ENCODE measurements at regions of chr3 and their contacts with region 1.

Region 1: DNA sequence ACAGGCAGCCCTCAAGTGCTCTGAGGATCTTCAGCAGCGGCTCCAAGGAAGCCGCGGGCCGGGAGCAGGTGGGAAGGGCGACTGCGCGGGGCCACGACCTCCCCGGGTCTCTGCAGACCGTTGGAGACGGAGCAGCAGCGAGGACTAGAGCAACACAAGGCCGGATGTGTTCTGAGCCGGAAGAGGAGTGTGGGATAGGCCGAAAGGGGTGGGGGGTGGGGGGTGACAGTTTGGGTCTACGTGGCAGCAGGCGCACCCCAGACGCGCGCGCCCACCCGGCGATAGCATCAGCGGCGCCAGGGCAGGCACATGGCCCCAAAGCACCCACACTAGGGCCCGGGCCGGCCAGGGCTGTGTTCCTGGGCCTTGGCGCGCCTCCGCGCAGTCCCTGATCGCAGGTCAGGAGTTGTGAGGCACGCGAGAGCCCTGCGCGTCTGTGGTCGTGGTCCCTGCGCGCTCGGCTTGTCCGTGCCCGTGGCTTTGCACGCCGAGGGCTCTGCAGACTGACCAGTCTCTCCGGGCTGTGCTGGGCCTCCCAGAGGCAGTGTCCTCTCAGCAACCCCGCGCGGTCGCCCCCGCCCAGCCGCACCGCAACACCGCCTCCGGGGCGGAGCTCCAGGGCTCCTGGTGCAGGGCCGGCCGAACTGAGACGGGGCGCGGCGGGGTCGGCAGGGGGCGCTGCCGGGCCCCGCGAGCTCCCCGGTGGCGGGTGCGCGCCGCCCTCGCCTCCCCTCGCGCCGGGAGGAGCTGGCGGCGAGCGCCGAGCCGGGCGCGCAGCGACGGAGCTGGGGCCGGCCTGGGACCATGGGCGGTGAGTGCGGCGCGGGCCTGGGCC is at the start of gene PXYLP1:
- DNase-seq: peak; percentile 75 to 84
- ATAC-seq: peak; percentile 94 to 96
- H3K4me3 ChIP-seq: peak within 1 kb of the TSS; percentile 90
- H3K27ac ChIP-seq: peak within 1 kb of the TSS; percentile 89 to 90
- H3K4me1 ChIP-seq: peaks cover 21% of the 10 kb centered on the region; the same call in 2 of the 3 replicates
- CTCF ChIP-seq: peak; percentile 95
- EP300 ChIP-seq: no peak
- POLR2A ChIP-seq: peak; percentile 89
- RAD21 ChIP-seq: peak in 1 of 2 experiments; percentile 64; a peak in 4 of 5 replicates
- polyA plus RNA-seq, gene PXYLP1: 11.7 and 12.1 TPM in 2 replicates

Region 2: DNA sequence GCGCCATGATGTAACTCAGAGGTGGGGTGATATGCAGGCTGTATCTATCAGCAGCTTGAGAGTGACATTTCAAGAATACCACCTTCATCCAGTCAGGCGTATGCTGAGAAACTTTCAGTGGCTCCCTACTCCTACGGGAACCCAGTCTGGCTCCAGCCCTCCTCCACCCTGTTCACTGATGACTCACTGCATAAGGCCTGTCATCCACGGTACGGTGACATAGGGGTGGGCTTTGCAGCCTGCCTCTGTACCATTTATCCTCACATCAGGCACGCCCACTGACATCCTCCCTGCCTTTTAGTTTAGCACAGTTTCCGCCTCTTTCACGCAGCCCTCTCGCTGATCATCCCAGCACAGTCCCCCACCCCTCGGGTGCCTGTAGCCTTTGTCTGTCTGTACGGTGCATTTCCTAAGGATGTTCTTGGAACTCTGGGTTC is 12.0 kb after region 1 on chr3:
- CTCF ChIA-PET with region 1: interaction called, 25 read pairs
- POLR2A ChIA-PET with region 1: interaction called, 4 read pairs
- DNase-seq: no peak
- ATAC-seq: peak in 1 of 2 experiments; percentile 42; a peak in 2 of 6 replicates
- H3K4me3 ChIP-seq: no peak overlapping the region
- H3K27ac ChIP-seq: no peak overlapping the region
- H3K4me1 ChIP-seq: 0 out of 3 replicates have a peak, but pooled peaks cover 7% of the 10 kb centered on the region
- CTCF ChIP-seq: no peak
- EP300 ChIP-seq: no peak
- POLR2A ChIP-seq: no peak
- RAD21 ChIP-seq: no peak

Region 3: DNA sequence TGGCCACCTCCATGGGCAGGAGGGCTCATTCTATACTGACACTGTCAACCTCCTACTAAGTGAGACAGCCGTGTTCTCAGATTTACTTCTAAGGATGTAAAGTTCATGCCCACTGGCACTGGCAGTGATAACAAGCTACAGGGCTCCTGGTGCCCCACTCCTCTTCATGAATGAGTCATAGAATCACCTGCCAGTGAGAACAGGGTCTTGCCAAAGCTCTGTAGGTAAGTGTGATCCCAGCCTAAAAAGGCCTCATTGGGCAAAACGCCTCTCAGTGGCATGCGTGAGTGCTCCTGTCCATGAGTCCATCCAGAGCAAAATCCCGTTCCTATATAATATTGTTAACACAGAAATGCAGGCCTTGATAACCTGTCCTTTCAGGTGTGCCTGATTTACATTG is 17.7 kb after region 1 on chr3:
- CTCF ChIA-PET with region 1: interaction called, 27 read pairs
- POLR2A ChIA-PET with region 1: interaction called, 4 read pairs
- DNase-seq: no peak
- ATAC-seq: no peak
- H3K4me3 ChIP-seq: no peak overlapping the region
- H3K27ac ChIP-seq: no peak overlapping the region
- H3K4me1 ChIP-seq: no peaks in the 10 kb centered on the region
- CTCF ChIP-seq: no peak
- EP300 ChIP-seq: no peak
- POLR2A ChIP-seq: no peak
- RAD21 ChIP-seq: no peak

Region 4: GRCh38 chr3:141255846-141256261 is 24.5 kb after region 1 on chr3:
- CTCF ChIA-PET with region 1: interaction called, 27 read pairs
- POLR2A ChIA-PET with region 1: interaction called, 3 read pairs
- DNase-seq: peak; percentile 46 to 55
- ATAC-seq: peak; percentile 64 to 93
- H3K4me3 ChIP-seq: no peak overlapping the region
- H3K27ac ChIP-seq: no peak overlapping the region
- H3K4me1 ChIP-seq: no peaks in the 10 kb centered on the region
- CTCF ChIP-seq: peak; percentile 34
- EP300 ChIP-seq: no peak
- POLR2A ChIP-seq: no peak
- RAD21 ChIP-seq: peak in 1 of 2 experiments; percentile 48; a peak in 2 of 5 replicates

Region 5: GRCh38 chr3:141291559-141292355 is 60.4 kb after region 1 on chr3:
- CTCF ChIA-PET with region 1: interaction called, 12 read pairs
- POLR2A ChIA-PET with region 1: interaction called, 3 read pairs
- DNase-seq: no peak
- ATAC-seq: no peak
- H3K4me3 ChIP-seq: no peak overlapping the region
- H3K27ac ChIP-seq: no peak overlapping the region
- H3K4me1 ChIP-seq: peaks cover 9% of the 10 kb centered on the region; the same call in 1 of the 3 replicates
- CTCF ChIP-seq: no peak
- EP300 ChIP-seq: no peak
- POLR2A ChIP-seq: no peak
- RAD21 ChIP-seq: no peak

Region 6: DNA sequence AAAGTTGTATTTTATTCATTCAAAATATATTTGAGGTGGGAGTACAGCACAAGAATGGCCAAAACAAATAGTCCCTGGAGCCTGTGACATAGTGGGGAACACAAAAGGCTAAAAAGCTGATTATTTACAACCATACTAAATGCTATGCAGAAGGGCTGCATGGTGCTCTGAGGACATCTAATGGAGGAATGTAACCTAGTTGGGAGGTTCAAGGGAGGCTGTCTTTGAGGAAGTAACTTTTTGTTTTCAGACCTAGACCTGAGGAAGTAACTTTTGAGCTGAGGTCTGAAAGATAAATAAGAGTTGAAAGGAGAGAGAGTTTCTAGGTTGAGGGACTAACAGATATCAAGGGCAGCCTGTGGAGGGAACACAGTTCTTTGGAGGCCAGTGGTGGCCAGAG is 220.7 kb after region 1 on chr3:
- CTCF ChIA-PET with region 1: interaction called, 12 read pairs
- POLR2A ChIA-PET with region 1: interaction called, 3 read pairs
- DNase-seq: peak; percentile 38 to 82
- ATAC-seq: peak; percentile 74 to 79
- H3K4me3 ChIP-seq: no peak overlapping the region
- H3K27ac ChIP-seq: peak overlapping the region; percentile 67 to 79
- H3K4me1 ChIP-seq: peaks cover 44% of the 10 kb centered on the region
- CTCF ChIP-seq: peak; percentile 84
- EP300 ChIP-seq: no peak
- POLR2A ChIP-seq: no peak
- RAD21 ChIP-seq: peak; percentile 96 to 98

Region 7: DNA sequence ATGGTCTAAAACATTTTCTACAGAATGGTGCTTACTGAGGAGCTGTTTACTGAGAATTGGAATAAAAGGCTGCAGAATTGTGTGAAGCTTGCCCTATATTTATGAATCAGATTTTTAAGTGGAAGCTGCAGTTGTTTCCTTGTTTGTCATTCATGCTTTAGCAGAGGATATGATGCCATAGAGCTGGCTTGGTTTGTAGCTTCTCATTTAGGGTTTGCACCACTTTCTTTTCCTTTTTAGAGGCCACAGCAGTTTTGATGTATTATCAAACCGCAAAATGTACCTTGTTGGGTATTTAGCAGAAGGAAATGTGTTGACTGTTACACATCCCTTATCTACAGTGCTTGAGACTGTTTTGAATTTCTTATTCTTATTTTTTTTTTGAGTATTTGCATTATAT is 321.7 kb after region 1 on chr3:
- CTCF ChIA-PET with region 1: no interaction called
- POLR2A ChIA-PET with region 1: no interaction called
- DNase-seq: no peak
- ATAC-seq: no peak
- H3K4me3 ChIP-seq: no peak overlapping the region
- H3K27ac ChIP-seq: no peak overlapping the region
- H3K4me1 ChIP-seq: no peaks in the 10 kb centered on the region
- CTCF ChIP-seq: no peak
- EP300 ChIP-seq: no peak
- POLR2A ChIP-seq: no peak
- RAD21 ChIP-seq: no peak